Heart left ventricle (tissue), 16 donors: ENCODE measurements at regions of chr7 and their contacts with region 1.

Region 1: DNA sequence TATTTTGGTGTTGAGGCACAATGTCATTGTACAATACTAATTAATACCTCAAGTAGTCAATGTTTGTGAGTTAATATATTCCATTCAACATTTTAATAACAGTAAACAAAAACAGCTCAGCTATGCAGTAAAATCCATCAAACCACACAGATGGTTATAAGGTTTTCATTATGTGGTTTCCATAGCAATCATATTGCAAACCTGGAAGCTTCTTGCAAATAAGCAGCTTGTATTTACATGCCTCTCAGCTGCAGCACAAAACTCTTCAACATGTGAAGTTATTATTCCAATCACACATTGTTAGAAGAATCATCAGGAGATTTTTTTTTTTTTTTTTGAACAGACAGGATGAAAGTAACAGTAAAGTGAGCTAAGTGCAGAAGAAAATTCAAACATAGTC is 170.2 kb downstream of the SKAP2 start:
- DNase-seq: no peak
- ATAC-seq: no peak
- H3K4me3 ChIP-seq: no peak overlapping the region
- H3K27ac ChIP-seq: no peak overlapping the region
- H3K4me1 ChIP-seq: peaks cover 0 to 3% (median 0%) of the 10 kb centered on the region in 12 donors
- H3K27me3 ChIP-seq: peaks cover 0 to 10% (median 0%) of the 10 kb centered on the region in 9 donors
- CTCF ChIP-seq: no peak
- POLR2A ChIP-seq: no peak

Region 2: GRCh38 chr7:26616235-26616634 is 77.9 kb before region 1 on chr7:
- intact Hi-C with region 1: no loop called
- DNase-seq: no peak
- ATAC-seq: no peak
- H3K4me3 ChIP-seq: no peak overlapping the region
- H3K27ac ChIP-seq: no peak overlapping the region
- H3K4me1 ChIP-seq: no peaks in the 10 kb centered on the region
- H3K27me3 ChIP-seq: peaks cover 0 to 2% (median 0%) of the 10 kb centered on the region in 9 donors
- CTCF ChIP-seq: no peak
- POLR2A ChIP-seq: no peak

Region 3: GRCh38 chr7:26787701-26788100 is 93.6 kb after region 1 on chr7:
- intact Hi-C with region 1: no loop called
- DNase-seq: no peak
- ATAC-seq: no peak
- H3K4me3 ChIP-seq: no peak overlapping the region
- H3K27ac ChIP-seq: no peak overlapping the region
- H3K4me1 ChIP-seq: no peaks in the 10 kb centered on the region
- H3K27me3 ChIP-seq: no peaks in the 10 kb centered on the region
- CTCF ChIP-seq: no peak
- POLR2A ChIP-seq: no peak

Region 4: GRCh38 chr7:26843705-26844104 is 149.6 kb after region 1 on chr7:
- intact Hi-C with region 1: loop called in 1 of 10 experiments (anchors 10 kb)
- DNase-seq: no peak
- ATAC-seq: no peak
- H3K4me3 ChIP-seq: no peak overlapping the region
- H3K27ac ChIP-seq: no peak overlapping the region
- H3K4me1 ChIP-seq: no peaks in the 10 kb centered on the region
- H3K27me3 ChIP-seq: peaks cover 0 to 20% (median 0%) of the 10 kb centered on the region in 9 donors
- CTCF ChIP-seq: no peak
- POLR2A ChIP-seq: no peak